Mammary epithelial cell (primary cell): ENCODE measurements at regions of chr1 and their contacts with region 1.

Region 1: GRCh38 chr1:247210376-247211117 is 38.7 kb upstream of the ZNF124 start:
- DNase-seq: peak; percentile 85
- H3K4me3 ChIP-seq: peak overlapping the region; percentile 88 to 97 (median 96)
- H3K27ac ChIP-seq: peak overlapping the region; percentile 68
- H3K4me1 ChIP-seq: peaks cover 8% of the 10 kb centered on the region
- H3K27me3 ChIP-seq: no peaks in the 10 kb centered on the region
- CTCF ChIP-seq: no peak

Region 2: DNA sequence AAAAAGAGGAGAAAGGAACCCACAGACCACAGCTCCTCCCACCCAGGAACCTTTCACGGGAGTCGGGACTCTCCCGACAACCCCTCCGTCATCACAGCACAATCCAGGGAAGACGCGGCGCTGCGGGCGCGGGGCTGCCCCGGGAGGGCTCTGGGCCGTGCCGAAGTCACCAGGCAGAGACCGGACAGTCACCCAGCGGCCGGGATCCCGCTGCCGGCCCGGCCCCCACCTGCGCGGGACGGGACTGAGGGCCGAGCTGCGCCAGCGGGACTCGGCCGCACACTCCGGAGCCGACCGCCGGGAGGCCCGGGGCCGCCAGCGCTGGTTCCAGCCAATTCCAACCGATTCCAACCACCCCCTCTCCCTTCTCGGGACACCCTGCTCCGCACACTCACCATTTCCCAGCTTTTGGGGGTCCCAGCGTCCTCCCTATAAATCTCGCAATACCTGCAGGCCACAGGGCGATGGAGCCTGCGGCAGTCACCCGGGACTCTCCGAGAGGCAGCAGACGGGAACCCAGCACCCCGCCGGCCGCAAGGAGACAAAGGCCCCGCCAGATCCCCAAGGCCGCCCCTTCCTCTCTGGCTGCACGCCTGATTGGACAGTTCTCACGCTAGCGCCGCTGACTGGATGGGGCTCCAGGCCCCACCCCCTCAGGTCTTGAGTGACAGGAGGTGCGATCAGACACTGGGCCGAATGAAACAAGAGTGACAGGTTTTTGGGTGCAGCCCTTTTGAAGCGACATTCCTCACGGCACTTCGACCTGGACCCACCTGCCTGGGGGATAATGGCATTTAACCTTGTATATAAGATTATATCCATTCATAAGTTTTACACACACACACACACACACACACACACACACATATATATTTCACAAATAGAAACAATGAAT is 202.8 kb before region 1 on chr1 and contains the start of gene ZNF695:
- CTCF ChIA-PET with region 1: no interaction called
- dilution Hi-C with region 1: no loop called
- in situ Hi-C with region 1: no loop called
- intact Hi-C with region 1: loop called (anchors 1 kb)
- DNase-seq: peak; percentile 96
- H3K4me3 ChIP-seq: peak within 1 kb of the TSS; percentile 49 to 69 (median 62)
- H3K27ac ChIP-seq: no peak within 1 kb of the TSS
- H3K4me1 ChIP-seq: no peaks in the 10 kb centered on the region
- H3K27me3 ChIP-seq: no peaks in the 10 kb centered on the region
- CTCF ChIP-seq: no peak
- total RNA-seq, gene ZNF695: 1.7 to 4.4 TPM

Region 3: GRCh38 chr1:247103859-247104591 is 106.5 kb before region 1 on chr1 and contains the start of gene ZNF669:
- CTCF ChIA-PET with region 1: no interaction called
- dilution Hi-C with region 1: no loop called
- in situ Hi-C with region 1: no loop called
- intact Hi-C with region 1: loop called (anchors 1 kb)
- DNase-seq: peak; percentile 92
- H3K4me3 ChIP-seq: peak within 1 kb of the TSS; percentile 64 to 95 (median 79)
- H3K27ac ChIP-seq: peak within 1 kb of the TSS; percentile 80
- H3K4me1 ChIP-seq: no peaks in the 10 kb centered on the region
- H3K27me3 ChIP-seq: no peaks in the 10 kb centered on the region
- CTCF ChIP-seq: no peak
- total RNA-seq, gene ZNF669: 7.4 to 9.0 TPM

Region 4: GRCh38 chr1:247247568-247247967 is 37.0 kb after region 1 on chr1:
- CTCF ChIA-PET with region 1: no interaction called
- dilution Hi-C with region 1: no loop called
- in situ Hi-C with region 1: no loop called
- intact Hi-C with region 1: no loop called
- DNase-seq: no peak
- H3K4me3 ChIP-seq: no peak overlapping the region
- H3K27ac ChIP-seq: no peak overlapping the region
- H3K4me1 ChIP-seq: no peaks in the 10 kb centered on the region
- H3K27me3 ChIP-seq: no peaks in the 10 kb centered on the region
- CTCF ChIP-seq: no peak

Region 5: GRCh38 chr1:247331172-247331991 is 120.8 kb after region 1 on chr1 and contains the start of gene ZNF496:
- CTCF ChIA-PET with region 1: no interaction called
- dilution Hi-C with region 1: no loop called
- in situ Hi-C with region 1: no loop called
- intact Hi-C with region 1: loop called (anchors 5 kb)
- DNase-seq: peak; percentile 78
- H3K4me3 ChIP-seq: peak within 1 kb of the TSS; percentile 89 to 93 (median 91)
- H3K27ac ChIP-seq: peak within 1 kb of the TSS; percentile 59
- H3K4me1 ChIP-seq: peaks cover 19% of the 10 kb centered on the region
- H3K27me3 ChIP-seq: no peaks in the 10 kb centered on the region
- CTCF ChIP-seq: no peak
- total RNA-seq, gene ZNF496: 18.3 to 23.8 TPM